HepG2 (cell line): ENCODE measurements at regions of chr14 and their contacts with region 1.

Region 1: DNA sequence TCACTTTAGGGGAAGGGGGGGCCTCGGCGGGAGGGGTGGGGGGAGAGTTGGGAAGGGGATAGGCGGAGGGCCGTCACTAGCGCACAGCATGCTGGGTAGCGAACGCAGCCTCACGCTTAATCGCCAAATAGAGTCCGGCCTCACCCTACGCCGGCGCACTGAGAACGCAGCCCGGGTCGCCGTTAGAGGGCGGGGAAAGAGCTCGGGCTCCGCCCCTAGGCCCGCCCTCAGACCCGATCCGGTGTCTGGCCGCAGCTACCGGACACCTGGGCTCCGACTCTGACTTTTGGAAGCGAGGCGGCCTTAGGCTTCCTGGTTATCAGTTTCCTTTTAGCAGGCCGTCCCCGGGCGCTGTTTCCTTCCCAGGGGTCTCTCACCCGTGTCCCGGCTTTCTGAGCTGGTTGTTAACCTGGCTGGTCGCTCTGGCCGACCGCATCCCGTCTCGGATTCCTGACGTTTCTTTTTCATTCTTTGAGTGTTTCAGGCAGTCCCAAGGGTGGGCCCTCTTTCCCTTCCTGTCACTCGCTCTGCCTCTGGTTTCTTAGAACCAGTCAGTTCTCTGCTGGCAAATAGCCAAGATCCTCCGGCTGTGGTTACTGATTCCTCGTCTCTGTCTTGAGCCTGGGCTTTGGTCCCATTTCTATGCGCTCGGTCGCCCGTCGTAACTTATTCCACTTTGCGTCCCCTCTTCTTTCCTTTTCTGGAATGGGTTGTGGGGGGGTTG is 378 bp upstream of the STRN3 start:
- DNase-seq: peak; percentile 99
- ATAC-seq: peak; percentile 93
- H3K4me3 ChIP-seq: peak overlapping the region; percentile 96 to 97 (median 96)
- H3K27ac ChIP-seq: peak overlapping the region; percentile 73
- H3K4me1 ChIP-seq: peaks cover 73% of the 10 kb centered on the region
- H3K27me3 ChIP-seq: peaks cover 0 to 5% of the 10 kb centered on the region in 2 experiments; a peak in 1 of 5 replicates
- CTCF ChIP-seq: peak; percentile 16; the same call in 1 of the 2 replicates
- EP300 ChIP-seq: peak in 1 of 2 experiments; percentile 19; a peak in 1 of 4 replicates
- POLR2A ChIP-seq: peak in 1 of 2 experiments; percentile 96; a peak in 2 of 4 replicates
- RAD21 ChIP-seq: peak; percentile 64

Region 2: GRCh38 chr14:30906752-30907658 is 119.6 kb before region 1 on chr14:
- CTCF ChIA-PET with region 1: no interaction called
- POLR2A ChIA-PET with region 1: no interaction called
- in situ Hi-C with region 1: no loop called
- intact Hi-C with region 1: no loop called
- DNase-seq: peak; percentile 58
- ATAC-seq: peak; percentile 37
- H3K4me3 ChIP-seq: no peak overlapping the region
- H3K27ac ChIP-seq: no peak overlapping the region
- H3K4me1 ChIP-seq: peaks cover 13% of the 10 kb centered on the region
- H3K27me3 ChIP-seq: no peaks in the 10 kb centered on the region
- CTCF ChIP-seq: peak; percentile 62
- EP300 ChIP-seq: no peak
- POLR2A ChIP-seq: no peak
- RAD21 ChIP-seq: peak; percentile 30; the same call in 1 of the 2 replicates

Region 3: GRCh38 chr14:30940886-30941285 is 85.7 kb before region 1 on chr14:
- CTCF ChIA-PET with region 1: no interaction called
- POLR2A ChIA-PET with region 1: no interaction called
- in situ Hi-C with region 1: no loop called
- intact Hi-C with region 1: no loop called
- DNase-seq: no peak
- ATAC-seq: no peak
- H3K4me3 ChIP-seq: no peak overlapping the region
- H3K27ac ChIP-seq: no peak overlapping the region
- H3K4me1 ChIP-seq: peaks cover 5% of the 10 kb centered on the region; the same call in 1 of the 2 replicates
- H3K27me3 ChIP-seq: no peaks in the 10 kb centered on the region
- CTCF ChIP-seq: no peak
- EP300 ChIP-seq: no peak
- POLR2A ChIP-seq: no peak
- RAD21 ChIP-seq: no peak

Region 4: GRCh38 chr14:30982533-30982932 is 44.0 kb before region 1 on chr14:
- CTCF ChIA-PET with region 1: no interaction called
- POLR2A ChIA-PET with region 1: interaction called, 20 read pairs
- in situ Hi-C with region 1: no loop called
- intact Hi-C with region 1: loop called (anchors 1 kb)
- DNase-seq: no peak
- ATAC-seq: no peak
- H3K4me3 ChIP-seq: no peak overlapping the region
- H3K27ac ChIP-seq: no peak overlapping the region
- H3K4me1 ChIP-seq: peaks cover 17% of the 10 kb centered on the region
- H3K27me3 ChIP-seq: no peaks in the 10 kb centered on the region
- CTCF ChIP-seq: no peak
- EP300 ChIP-seq: no peak
- POLR2A ChIP-seq: no peak
- RAD21 ChIP-seq: no peak

Region 5: GRCh38 chr14:31003284-31003683 is 23.3 kb before region 1 on chr14:
- CTCF ChIA-PET with region 1: no interaction called
- POLR2A ChIA-PET with region 1: interaction called, 12 read pairs
- in situ Hi-C with region 1: no loop called
- intact Hi-C with region 1: loop called (anchors 2 kb)
- DNase-seq: no peak
- ATAC-seq: no peak; the same call in 2 of the 3 replicates
- H3K4me3 ChIP-seq: no peak overlapping the region
- H3K27ac ChIP-seq: no peak overlapping the region
- H3K4me1 ChIP-seq: peaks cover 14% of the 10 kb centered on the region; the same call in 1 of the 2 replicates
- H3K27me3 ChIP-seq: no peaks in the 10 kb centered on the region
- CTCF ChIP-seq: no peak
- EP300 ChIP-seq: no peak
- POLR2A ChIP-seq: no peak
- RAD21 ChIP-seq: no peak

Region 6: DNA sequence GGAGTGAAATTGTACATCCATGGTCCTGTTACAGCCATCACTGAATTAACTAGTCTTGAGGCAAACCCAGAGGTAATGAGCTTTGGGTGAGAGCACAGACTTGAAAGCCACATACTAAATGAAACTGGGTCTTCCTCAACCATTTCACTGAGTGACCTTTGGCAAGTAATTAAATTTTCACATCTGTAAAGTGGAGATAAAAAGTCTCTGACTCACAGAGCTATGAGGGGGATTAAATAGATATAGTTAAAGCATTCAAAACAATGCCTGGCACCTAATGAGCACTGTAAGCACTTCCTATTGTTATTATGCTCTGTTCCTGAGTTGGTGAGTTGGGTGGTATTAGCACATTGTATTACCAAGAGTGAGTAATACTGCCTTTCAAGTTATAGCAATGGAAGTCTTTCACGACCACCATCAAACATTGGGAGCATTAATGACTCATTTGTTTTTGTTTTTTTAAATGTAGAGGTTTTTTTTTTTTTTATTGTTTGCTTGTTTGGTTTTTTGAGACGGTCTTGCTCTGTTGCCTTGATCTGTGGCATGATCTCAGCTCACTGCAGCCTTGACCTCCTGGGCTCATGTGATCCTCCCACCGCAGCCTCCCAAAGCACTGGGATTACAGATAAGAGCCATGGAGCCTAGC is 12.1 kb after region 1 on chr14:
- CTCF ChIA-PET with region 1: no interaction called
- POLR2A ChIA-PET with region 1: interaction called, 126 read pairs
- in situ Hi-C with region 1: no loop called
- intact Hi-C with region 1: loop called (anchors 1 kb)
- DNase-seq: peak; percentile 82
- ATAC-seq: peak; percentile 49
- H3K4me3 ChIP-seq: no peak overlapping the region
- H3K27ac ChIP-seq: peak overlapping the region; percentile 48
- H3K4me1 ChIP-seq: peaks cover 38% of the 10 kb centered on the region
- H3K27me3 ChIP-seq: no peaks in the 10 kb centered on the region
- CTCF ChIP-seq: no peak
- EP300 ChIP-seq: peak in 1 of 2 experiments; percentile 68; a peak in 1 of 4 replicates
- POLR2A ChIP-seq: no peak
- RAD21 ChIP-seq: no peak

Region 7: DNA sequence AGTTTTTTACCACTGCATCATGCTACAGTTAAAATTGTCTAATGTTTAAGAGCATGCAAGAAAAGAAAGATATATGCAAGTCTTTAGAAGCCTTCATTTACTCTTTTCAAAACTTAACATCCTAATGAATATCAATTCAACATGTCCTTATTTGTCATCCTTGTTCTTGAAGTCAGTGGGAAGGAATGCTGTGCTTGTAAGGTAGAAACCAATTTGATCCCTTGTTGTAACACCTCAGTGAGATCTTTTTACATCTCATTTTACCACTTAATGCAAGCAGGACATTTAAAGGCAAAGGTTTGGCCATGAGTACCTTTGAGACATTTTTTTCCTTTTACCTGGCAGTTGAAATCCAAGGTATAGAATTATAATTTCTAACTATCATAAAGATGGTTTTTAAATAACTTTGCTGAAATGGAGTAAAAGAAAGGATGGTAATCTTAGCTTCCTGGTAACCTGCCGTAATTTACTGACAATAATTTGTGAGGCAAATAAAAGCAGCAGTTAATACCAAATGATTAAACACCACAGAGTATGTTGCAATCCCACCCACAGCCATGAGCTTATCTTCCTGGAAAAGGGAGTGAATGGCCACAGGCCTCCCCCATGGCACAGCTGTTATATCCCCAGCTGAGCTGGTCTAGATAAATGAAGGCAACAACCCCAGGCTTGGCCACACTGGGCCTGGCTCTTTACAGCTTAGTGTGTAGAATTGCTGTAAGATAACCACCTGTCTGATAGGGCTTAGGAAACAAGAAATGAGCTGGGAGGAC is 32.8 kb after region 1 on chr14:
- CTCF ChIA-PET with region 1: no interaction called
- POLR2A ChIA-PET with region 1: interaction called, 28 read pairs
- in situ Hi-C with region 1: no loop called
- intact Hi-C with region 1: no loop called
- DNase-seq: peak; percentile 70
- ATAC-seq: peak; percentile 56
- H3K4me3 ChIP-seq: no peak overlapping the region
- H3K27ac ChIP-seq: no peak overlapping the region
- H3K4me1 ChIP-seq: peaks cover 7% of the 10 kb centered on the region; the same call in 1 of the 2 replicates
- H3K27me3 ChIP-seq: no peaks in the 10 kb centered on the region
- CTCF ChIP-seq: no peak
- EP300 ChIP-seq: peak in 1 of 2 experiments; percentile 9; a peak in 1 of 4 replicates
- POLR2A ChIP-seq: no peak
- RAD21 ChIP-seq: no peak

Region 8: GRCh38 chr14:31090883-31091764 is 64.6 kb after region 1 on chr14:
- CTCF ChIA-PET with region 1: no interaction called
- POLR2A ChIA-PET with region 1: interaction called, 28 read pairs
- in situ Hi-C with region 1: loop called (anchors 10 kb)
- intact Hi-C with region 1: loop called (anchors 2 kb)
- DNase-seq: peak; percentile 97
- ATAC-seq: peak; percentile 86
- H3K4me3 ChIP-seq: peak overlapping the region in 2 of 3 experiments; percentile 11 to 15; a peak in 3 of 6 replicates
- H3K27ac ChIP-seq: peak overlapping the region; percentile 79
- H3K4me1 ChIP-seq: peaks cover 37% of the 10 kb centered on the region
- H3K27me3 ChIP-seq: no peaks in the 10 kb centered on the region
- CTCF ChIP-seq: no peak
- EP300 ChIP-seq: peak; percentile 39 to 84
- POLR2A ChIP-seq: no peak
- RAD21 ChIP-seq: no peak

Region 9: GRCh38 chr14:31420319-31421111 is 394.0 kb after region 1 on chr14 and contains the start of gene HEATR5A:
- CTCF ChIA-PET with region 1: no interaction called
- POLR2A ChIA-PET with region 1: interaction called, 27 read pairs
- in situ Hi-C with region 1: no loop called
- intact Hi-C with region 1: no loop called
- DNase-seq: peak; percentile 98
- ATAC-seq: peak; percentile 90
- H3K4me3 ChIP-seq: peak within 1 kb of the TSS; percentile 73 to 99 (median 85)
- H3K27ac ChIP-seq: peak within 1 kb of the TSS; percentile 89
- H3K4me1 ChIP-seq: peaks cover 27% of the 10 kb centered on the region
- H3K27me3 ChIP-seq: no peaks in the 10 kb centered on the region; a peak in 1 of 5 replicates
- CTCF ChIP-seq: peak; percentile 76
- EP300 ChIP-seq: peak in 1 of 2 experiments; percentile 87; a peak in 1 of 4 replicates
- POLR2A ChIP-seq: peak in 1 of 2 experiments; percentile 99; a peak in 2 of 4 replicates
- RAD21 ChIP-seq: peak; percentile 74
- total RNA-seq, gene HEATR5A: 105 and 172 TPM in 2 replicates